ENCODE measurements at regions of chrX and their contacts with region 1.

Region 1: DNA sequence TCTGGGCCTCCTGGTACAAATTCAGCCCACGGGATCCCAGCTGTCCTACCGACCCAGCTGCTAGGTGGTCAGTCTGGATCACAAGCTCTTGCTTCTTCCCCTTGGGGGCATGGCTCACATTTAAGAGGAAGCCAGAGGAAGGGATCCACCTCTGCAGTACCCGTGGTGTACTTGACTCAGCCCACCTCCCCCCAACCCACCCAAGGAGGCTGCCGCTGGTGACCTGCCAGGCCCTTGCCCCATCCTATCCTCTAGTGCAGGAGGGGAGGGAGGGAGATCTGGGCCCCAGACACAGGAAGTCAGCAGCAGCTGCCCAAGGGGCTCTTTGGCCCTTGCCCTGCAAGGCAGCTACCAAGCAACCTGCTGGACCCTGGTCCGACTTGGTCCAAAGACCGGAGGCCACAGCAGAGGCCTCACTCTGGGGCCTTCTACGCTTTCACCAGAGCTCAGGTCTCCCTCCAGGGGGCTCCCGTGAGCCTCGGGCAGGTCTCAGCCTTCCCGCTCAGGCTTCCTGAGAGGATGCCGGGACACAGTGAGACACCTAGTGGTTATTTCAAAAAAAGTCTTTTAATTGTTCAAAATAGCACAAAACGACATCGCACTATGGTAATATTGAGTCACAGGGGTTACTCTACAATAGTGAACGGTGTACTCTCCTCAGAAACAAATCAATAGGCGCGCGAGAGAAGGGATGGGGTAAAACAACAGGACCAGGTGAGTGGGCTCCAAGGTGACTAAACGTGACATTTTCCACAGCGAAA is 2.7 kb upstream of the RENBP start:
- DNase-seq: peak; percentile 85
- ATAC-seq: peak; percentile 77
- H3K4me3 Mint-ChIP-seq: no peak overlapping the region
- H3K27ac Mint-ChIP-seq: peak overlapping the region; percentile 97
- H3K4me1 Mint-ChIP-seq: peaks cover 14% of the 10 kb centered on the region
- H3K27me3 Mint-ChIP-seq: no peaks in the 10 kb centered on the region
- CTCF ChIP-seq: no peak

Region 2: DNA sequence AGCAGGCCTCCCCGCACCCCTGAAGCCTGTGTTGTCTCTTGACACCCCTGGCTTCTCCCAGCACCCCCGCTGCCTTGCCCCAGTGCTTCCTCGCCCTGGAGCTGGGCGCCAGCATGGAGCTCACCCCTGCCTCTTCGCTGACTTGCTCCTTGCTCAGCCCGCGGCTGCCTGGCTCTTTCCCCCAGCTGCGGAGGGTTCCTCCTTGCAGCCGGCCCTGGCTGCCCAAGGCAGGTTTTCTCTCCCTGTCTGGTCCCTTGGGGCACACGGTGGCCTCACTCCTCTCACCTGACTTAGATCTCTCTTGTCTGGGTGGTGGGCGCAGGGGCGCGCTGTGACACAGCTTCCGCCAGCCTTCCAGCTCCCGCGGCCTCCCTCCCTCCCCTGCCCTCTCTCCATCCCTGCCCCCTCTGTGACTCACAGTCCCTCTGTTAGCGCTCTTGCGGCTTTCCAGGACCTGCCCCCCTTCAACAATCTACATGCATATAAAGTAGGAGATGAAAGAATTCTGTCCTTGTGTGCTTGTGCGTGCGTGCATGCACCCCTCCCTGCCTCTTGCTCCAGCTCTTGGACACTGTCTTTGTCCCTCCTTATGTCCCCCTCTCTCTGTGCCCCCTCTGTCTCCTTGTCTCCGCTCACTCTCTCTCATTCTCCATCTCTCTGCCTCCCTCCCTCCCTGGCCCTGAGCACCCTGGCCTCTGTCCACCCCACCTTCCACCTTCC is 180.9 kb before region 1 on chrX:
- CTCF ChIA-PET with region 1: interaction called, 14 read pairs
- POLR2A ChIA-PET with region 1: no interaction called
- DNase-seq: no peak
- ATAC-seq: no peak
- H3K4me3 Mint-ChIP-seq: no peak overlapping the region
- H3K27ac Mint-ChIP-seq: 0 out of 2 replicates have a peak overlapping the region, but pooled peaks have one; percentile 32
- H3K4me1 Mint-ChIP-seq: peaks cover 3% of the 10 kb centered on the region; the same call in 1 of the 2 replicates
- H3K27me3 Mint-ChIP-seq: no peaks in the 10 kb centered on the region
- CTCF ChIP-seq: no peak

Region 3: DNA sequence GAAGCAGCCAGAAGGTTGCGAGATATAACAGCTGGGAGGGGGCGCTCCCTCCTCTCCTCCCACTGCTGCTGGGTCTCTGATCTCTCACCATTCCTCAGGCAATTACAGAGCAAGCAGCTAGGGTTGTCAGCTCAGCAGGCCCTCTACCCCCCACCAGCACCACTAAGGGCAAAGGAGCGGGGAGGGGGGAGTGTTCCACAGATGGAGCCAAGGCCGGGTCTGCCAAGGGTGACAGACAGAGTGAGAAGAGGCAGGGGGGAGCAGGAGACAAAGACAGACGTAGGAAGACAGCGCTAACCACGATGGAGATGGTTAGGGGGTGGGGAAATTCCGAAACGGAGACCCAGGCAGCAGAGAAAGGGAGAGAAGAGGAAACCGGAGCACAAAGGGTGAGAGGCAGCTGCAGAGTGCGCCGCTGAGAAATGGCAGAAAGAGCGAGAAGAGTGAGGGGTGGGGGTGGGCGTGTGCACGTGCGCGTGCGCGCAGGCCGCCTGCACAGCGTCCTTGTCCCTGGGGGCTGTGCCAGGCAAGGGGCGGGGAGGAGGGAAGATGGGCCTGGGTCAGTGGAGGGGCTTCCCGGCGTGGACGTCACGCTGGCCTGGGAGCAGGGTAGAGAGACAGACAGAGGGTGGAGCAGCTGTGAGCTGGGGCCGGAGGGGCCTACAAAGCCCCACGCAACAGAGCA is 68.1 kb before region 1 on chrX:
- CTCF ChIA-PET with region 1: interaction called, 10 read pairs
- POLR2A ChIA-PET with region 1: no interaction called
- DNase-seq: peak; percentile 54
- ATAC-seq: peak; percentile 30
- H3K4me3 Mint-ChIP-seq: peak overlapping the region; percentile 51
- H3K27ac Mint-ChIP-seq: no peak overlapping the region
- H3K4me1 Mint-ChIP-seq: peaks cover 59% of the 10 kb centered on the region
- H3K27me3 Mint-ChIP-seq: no peaks in the 10 kb centered on the region; the same call in 1 of the 2 replicates
- CTCF ChIP-seq: no peak

Region 4: GRCh38 chrX:153885968-153886903 is 61.0 kb before region 1 on chrX and contains the start of gene L1CAM:
- CTCF ChIA-PET with region 1: interaction called, 15 read pairs
- POLR2A ChIA-PET with region 1: no interaction called
- DNase-seq: peak; percentile 49
- ATAC-seq: peak; percentile 19
- H3K4me3 Mint-ChIP-seq: peak within 1 kb of the TSS; percentile 68
- H3K27ac Mint-ChIP-seq: no peak within 1 kb of the TSS
- H3K4me1 Mint-ChIP-seq: peaks cover 24% of the 10 kb centered on the region
- H3K27me3 Mint-ChIP-seq: peaks cover 10% of the 10 kb centered on the region
- CTCF ChIP-seq: no peak
- total RNA-seq, gene L1CAM: 40.2 to 55.2 TPM (median 49.4 TPM) in 3 replicates

Region 5: DNA sequence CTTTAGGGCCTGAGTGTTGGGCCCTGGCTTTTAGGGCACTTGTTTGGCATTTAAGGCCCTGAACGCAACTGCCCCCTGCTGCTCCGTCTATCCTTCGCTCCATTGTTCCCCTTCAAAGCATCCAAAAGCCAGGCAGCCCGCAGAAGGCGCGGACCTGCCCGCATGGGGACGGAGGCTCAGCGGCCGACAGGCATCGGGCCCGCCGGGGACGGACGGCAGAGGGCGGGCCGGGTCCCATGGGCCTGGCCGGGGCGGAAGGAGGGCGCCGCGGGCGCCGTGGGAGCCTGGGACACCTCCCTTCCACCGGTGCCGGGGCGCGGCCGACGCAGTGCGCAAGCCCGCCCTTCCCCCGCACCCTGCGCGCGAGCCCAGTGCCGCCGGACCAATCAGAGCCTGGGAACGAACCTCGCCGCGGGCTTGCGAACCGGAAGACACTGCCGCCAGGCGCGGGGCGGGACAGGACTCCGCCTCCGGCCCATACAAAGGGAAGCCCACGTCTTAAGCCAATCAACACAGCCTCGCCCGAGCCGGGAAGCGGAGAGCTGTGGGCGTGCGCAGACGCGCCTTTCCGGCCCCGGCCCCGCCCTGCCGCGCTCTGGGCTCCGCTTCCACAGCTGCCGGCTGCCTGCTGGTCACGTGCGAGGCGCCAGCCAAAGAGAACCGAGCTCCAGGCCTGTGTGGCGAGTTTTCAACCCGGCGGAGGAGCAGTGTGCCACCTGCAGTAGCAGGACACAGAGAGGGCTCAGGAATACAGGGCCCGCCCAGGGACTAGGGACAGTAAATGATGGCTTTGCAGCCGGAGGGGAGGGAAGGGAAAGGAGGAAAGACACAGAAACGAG is 19.0 kb before region 1 on chrX:
- CTCF ChIA-PET with region 1: interaction called, 116 read pairs
- POLR2A ChIA-PET with region 1: interaction called, 8 read pairs
- DNase-seq: peak; percentile 91
- ATAC-seq: peak; percentile 89
- H3K4me3 Mint-ChIP-seq: peak overlapping the region; percentile 79
- H3K27ac Mint-ChIP-seq: peak overlapping the region; percentile 98
- H3K4me1 Mint-ChIP-seq: peaks cover 25% of the 10 kb centered on the region
- H3K27me3 Mint-ChIP-seq: no peaks in the 10 kb centered on the region
- CTCF ChIP-seq: no peak

Region 6: DNA sequence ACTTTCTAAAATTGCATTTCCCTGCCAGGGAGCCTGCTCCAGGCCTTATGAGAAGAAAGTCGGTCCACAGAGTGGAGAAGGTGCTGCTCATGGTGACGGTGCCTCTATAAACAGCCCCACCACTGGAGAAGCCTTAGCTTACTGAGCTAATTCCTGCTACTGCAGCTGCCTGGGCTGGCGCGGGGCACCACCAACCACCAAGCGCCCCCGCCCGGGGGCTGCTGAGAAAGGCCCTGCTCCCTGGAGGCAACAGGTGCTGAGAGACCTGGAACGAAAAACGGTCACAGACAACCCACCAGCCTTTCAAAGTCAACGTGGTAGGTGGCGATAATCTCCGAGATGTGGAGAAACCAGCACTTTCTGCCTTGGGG is 21.6 kb after region 1 on chrX:
- CTCF ChIA-PET with region 1: interaction called, 13 read pairs
- POLR2A ChIA-PET with region 1: interaction called, 3 read pairs
- DNase-seq: no peak
- ATAC-seq: no peak
- H3K4me3 Mint-ChIP-seq: peak overlapping the region; percentile 100
- H3K27ac Mint-ChIP-seq: no peak overlapping the region
- H3K4me1 Mint-ChIP-seq: peaks cover 27% of the 10 kb centered on the region
- H3K27me3 Mint-ChIP-seq: no peaks in the 10 kb centered on the region
- CTCF ChIP-seq: no peak

Measured in WTC11 (cell line).